Activated CD4-positive, alpha-beta memory T cell treated with anti-CD3 and anti-CD28 coated beads for 36 hours (primary cell): ENCODE measurements at regions of chr12 and their contacts with region 1.

Region 1: GRCh38 chr12:12376646-12377448 is 20.0 kb downstream of the BORCS5 start:
- DNase-seq: no peak
- H3K4me3 Mint-ChIP-seq: no peak overlapping the region
- H3K27ac Mint-ChIP-seq: peak overlapping the region; percentile 70
- H3K4me1 Mint-ChIP-seq: peaks cover 45% of the 10 kb centered on the region
- H3K27me3 Mint-ChIP-seq: no peaks in the 10 kb centered on the region

Region 2: GRCh38 chr12:12356886-12357718 is 19.7 kb before region 1 on chr12 and contains the start of gene BORCS5:
- CTCF ChIA-PET with region 1: interaction called, 10 read pairs
- POLR2A ChIA-PET with region 1: interaction called, 5 read pairs
- intact Hi-C with region 1: loop called (anchors 1 kb)
- DNase-seq: peak; percentile 99
- H3K4me3 Mint-ChIP-seq: peak within 1 kb of the TSS; percentile 98
- H3K27ac Mint-ChIP-seq: peak within 1 kb of the TSS; percentile 99
- H3K4me1 Mint-ChIP-seq: peaks cover 43% of the 10 kb centered on the region
- H3K27me3 Mint-ChIP-seq: no peaks in the 10 kb centered on the region
- total RNA-seq, gene BORCS5: 43.7 to 47.8 TPM

Region 3: GRCh38 chr12:12456637-12457036 is 79.8 kb after region 1 on chr12:
- CTCF ChIA-PET with region 1: interaction called, 10 read pairs
- POLR2A ChIA-PET with region 1: interaction called, 7 read pairs
- intact Hi-C with region 1: loop called (anchors 1 kb)
- DNase-seq: no peak
- H3K4me3 Mint-ChIP-seq: peak overlapping the region; percentile 47
- H3K27ac Mint-ChIP-seq: peak overlapping the region; percentile 93
- H3K4me1 Mint-ChIP-seq: peaks cover 63% of the 10 kb centered on the region
- H3K27me3 Mint-ChIP-seq: no peaks in the 10 kb centered on the region

Region 4: DNA sequence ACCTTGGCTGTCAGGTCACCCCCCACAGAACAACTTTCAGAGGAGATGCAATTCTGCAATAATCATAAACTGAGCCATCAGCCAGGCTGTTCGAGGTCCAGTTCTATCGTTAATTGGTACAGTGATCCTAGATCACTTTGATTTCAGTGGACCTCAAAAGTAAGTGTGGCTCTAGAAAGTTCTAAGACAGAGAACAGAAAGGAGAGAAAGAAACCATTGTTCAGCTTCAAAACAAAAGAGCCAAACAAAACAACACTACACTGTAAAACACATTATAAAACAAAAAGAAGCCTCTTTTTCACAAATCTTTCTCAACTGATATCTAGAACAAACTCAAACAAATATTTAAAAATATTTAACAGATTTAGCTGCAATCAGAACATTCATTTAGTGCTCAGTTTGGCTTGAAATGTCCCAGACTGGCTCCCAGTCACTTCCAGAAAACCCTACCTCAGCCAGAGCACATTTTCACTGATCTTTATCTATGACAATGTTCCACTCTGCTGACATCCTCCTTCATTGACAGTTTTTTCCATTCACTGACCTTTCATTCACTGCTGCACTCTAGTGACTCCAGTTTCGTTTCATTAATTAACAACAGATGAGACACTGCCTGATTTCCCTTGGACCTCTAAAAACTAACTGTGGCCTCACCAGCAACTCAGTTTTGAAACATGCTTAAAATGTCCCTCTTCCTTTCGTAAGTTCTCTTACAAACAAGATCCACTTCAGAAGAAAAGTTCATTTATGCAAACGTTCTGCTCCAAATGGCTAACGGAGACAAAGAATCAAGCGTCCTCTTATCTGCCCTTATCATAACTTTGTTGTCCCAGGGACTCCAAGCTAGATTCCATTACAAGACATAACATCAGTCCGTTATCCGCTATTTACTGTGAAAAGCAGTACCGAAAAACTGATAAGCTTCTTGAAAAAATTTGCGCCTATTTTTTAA is 129.0 kb after region 1 on chr12:
- CTCF ChIA-PET with region 1: interaction called, 40 read pairs
- POLR2A ChIA-PET with region 1: interaction called, 8 read pairs
- intact Hi-C with region 1: loop called (anchors 1 kb)
- DNase-seq: peak; percentile 63
- H3K4me3 Mint-ChIP-seq: peak overlapping the region; percentile 63
- H3K27ac Mint-ChIP-seq: peak overlapping the region; percentile 95
- H3K4me1 Mint-ChIP-seq: peaks cover 57% of the 10 kb centered on the region
- H3K27me3 Mint-ChIP-seq: no peaks in the 10 kb centered on the region

Region 5: GRCh38 chr12:12654691-12655460 is 278.0 kb after region 1 on chr12:
- CTCF ChIA-PET with region 1: interaction called, 28 read pairs
- POLR2A ChIA-PET with region 1: no interaction called
- intact Hi-C with region 1: loop called (anchors 1 kb)
- DNase-seq: no peak
- H3K4me3 Mint-ChIP-seq: no peak overlapping the region
- H3K27ac Mint-ChIP-seq: no peak overlapping the region
- H3K4me1 Mint-ChIP-seq: peaks cover 9% of the 10 kb centered on the region
- H3K27me3 Mint-ChIP-seq: no peaks in the 10 kb centered on the region

Region 6: GRCh38 chr12:12704593-12705230 is 327.9 kb after region 1 on chr12:
- CTCF ChIA-PET with region 1: interaction called, 9 read pairs
- POLR2A ChIA-PET with region 1: no interaction called
- intact Hi-C with region 1: loop called (anchors 1 kb)
- DNase-seq: peak; percentile 34
- H3K4me3 Mint-ChIP-seq: no peak overlapping the region
- H3K27ac Mint-ChIP-seq: no peak overlapping the region
- H3K4me1 Mint-ChIP-seq: peaks cover 29% of the 10 kb centered on the region
- H3K27me3 Mint-ChIP-seq: no peaks in the 10 kb centered on the region

Region 7: GRCh38 chr12:12736759-12737676 is 360.2 kb after region 1 on chr12:
- CTCF ChIA-PET with region 1: interaction called, 42 read pairs
- POLR2A ChIA-PET with region 1: no interaction called
- intact Hi-C with region 1: no loop called
- DNase-seq: peak; percentile 76
- H3K4me3 Mint-ChIP-seq: peak overlapping the region; percentile 59
- H3K27ac Mint-ChIP-seq: peak overlapping the region; percentile 88
- H3K4me1 Mint-ChIP-seq: peaks cover 46% of the 10 kb centered on the region
- H3K27me3 Mint-ChIP-seq: no peaks in the 10 kb centered on the region